IMR-90 (cell line): ENCODE measurements at regions of chr6 and their contacts with region 1.

Region 1: DNA sequence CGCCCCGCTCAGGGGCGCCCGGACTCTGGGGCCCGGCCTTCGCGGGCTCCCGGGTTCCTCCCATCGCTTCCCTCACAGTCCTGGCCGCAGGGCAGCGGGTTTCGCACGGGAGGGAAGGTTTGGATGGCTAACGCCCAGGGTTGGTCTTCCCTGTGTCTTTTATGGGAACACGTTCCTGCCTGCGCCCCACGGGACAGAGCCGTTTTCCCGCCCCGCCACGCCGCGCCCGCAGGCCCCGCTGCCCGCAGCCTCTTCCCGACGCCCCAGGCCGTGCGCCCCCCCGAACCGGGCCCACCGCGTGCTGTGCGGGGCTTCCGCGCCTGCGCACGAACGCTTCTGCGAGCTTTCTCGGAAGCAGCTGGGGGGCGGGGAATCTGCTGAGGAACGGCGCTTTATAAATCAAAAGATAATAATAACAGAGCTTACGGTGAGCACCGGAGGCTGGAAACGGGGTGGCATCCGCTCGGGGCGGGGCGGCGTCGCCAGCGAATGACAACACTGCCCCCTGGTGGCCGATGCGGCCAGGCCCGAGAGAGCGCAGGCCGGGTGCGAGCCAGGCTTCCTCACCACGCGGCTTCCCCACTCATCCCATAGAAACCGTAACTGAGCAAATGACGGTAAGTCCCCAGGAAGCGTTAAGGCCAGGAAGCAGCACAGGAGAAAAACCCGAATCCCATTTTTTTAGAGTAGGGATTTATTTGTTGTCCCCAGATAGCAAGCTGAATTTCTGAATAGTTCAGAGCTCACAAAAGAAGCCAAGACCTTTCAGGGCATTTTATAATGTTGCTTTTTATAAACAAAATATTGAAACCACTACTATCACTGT is 116.4 kb downstream of the MYLK4 start:
- DNase-seq: peak; percentile 81
- ATAC-seq: peak; percentile 88
- H3K4me3 ChIP-seq: peak overlapping the region; percentile 17; the same call in 1 of the 2 replicates
- H3K27ac ChIP-seq: peak overlapping the region; percentile 24
- H3K4me1 ChIP-seq: peaks cover 19% of the 10 kb centered on the region
- H3K27me3 ChIP-seq: peaks cover under 1% of the 10 kb centered on the region
- CTCF ChIP-seq: peak; percentile 97
- POLR2A ChIP-seq: 0 out of 2 replicates have a peak, but pooled peaks have one; percentile 33
- RAD21 ChIP-seq: peak; percentile 94

Region 2: GRCh38 chr6:1686117-1687098 is 947.9 kb before region 1 on chr6:
- CTCF ChIA-PET with region 1: no interaction called
- POLR2A ChIA-PET with region 1: no interaction called
- dilution Hi-C with region 1: no loop called
- in situ Hi-C with region 1: no loop called
- intact Hi-C with region 1: loop called (anchors 2 kb)
- DNase-seq: peak; percentile 96
- ATAC-seq: peak; percentile 89
- H3K4me3 ChIP-seq: no peak overlapping the region
- H3K27ac ChIP-seq: peak overlapping the region; percentile 83
- H3K4me1 ChIP-seq: peaks cover 14% of the 10 kb centered on the region
- H3K27me3 ChIP-seq: no peaks in the 10 kb centered on the region
- CTCF ChIP-seq: peak; percentile 50
- POLR2A ChIP-seq: no peak; the same call in 1 of the 2 replicates
- RAD21 ChIP-seq: peak; percentile 19; the same call in 1 of the 2 replicates

Region 3: GRCh38 chr6:2186516-2186915 is 447.8 kb before region 1 on chr6:
- CTCF ChIA-PET with region 1: no interaction called
- POLR2A ChIA-PET with region 1: no interaction called
- dilution Hi-C with region 1: no loop called
- in situ Hi-C with region 1: no loop called
- intact Hi-C with region 1: loop called (anchors 10 kb)
- DNase-seq: no peak
- ATAC-seq: no peak
- H3K4me3 ChIP-seq: no peak overlapping the region
- H3K27ac ChIP-seq: no peak overlapping the region
- H3K4me1 ChIP-seq: peaks cover 2% of the 10 kb centered on the region
- H3K27me3 ChIP-seq: no peaks in the 10 kb centered on the region
- CTCF ChIP-seq: no peak
- POLR2A ChIP-seq: no peak
- RAD21 ChIP-seq: no peak

Region 4: DNA sequence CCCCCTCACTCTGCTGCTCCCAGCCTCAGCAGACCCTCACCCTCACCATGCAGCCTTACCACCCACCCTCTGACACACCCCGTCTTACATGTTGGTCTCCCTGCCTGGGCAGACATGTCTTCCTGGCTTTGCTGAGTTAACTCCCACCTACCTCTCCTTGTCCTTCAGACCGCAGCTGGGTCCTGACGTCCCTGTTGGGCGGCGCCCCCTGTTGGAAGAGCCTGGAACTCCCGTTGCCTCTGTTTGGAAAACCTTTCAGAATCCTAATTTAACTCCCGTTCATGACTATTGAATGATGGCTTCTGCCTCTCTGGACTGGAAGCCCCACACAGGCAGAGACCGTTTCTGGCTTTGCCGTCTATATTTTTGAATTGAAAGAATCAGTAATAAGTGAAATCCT is 128.7 kb before region 1 on chr6:
- CTCF ChIA-PET with region 1: no interaction called
- POLR2A ChIA-PET with region 1: no interaction called
- dilution Hi-C with region 1: no loop called
- in situ Hi-C with region 1: no loop called
- intact Hi-C with region 1: loop called (anchors 5 kb)
- DNase-seq: no peak
- ATAC-seq: no peak
- H3K4me3 ChIP-seq: no peak overlapping the region
- H3K27ac ChIP-seq: no peak overlapping the region
- H3K4me1 ChIP-seq: peaks cover 9% of the 10 kb centered on the region; the same call in 1 of the 2 replicates
- H3K27me3 ChIP-seq: peaks cover 23% of the 10 kb centered on the region
- CTCF ChIP-seq: peak; percentile 17; the same call in 1 of the 2 replicates
- POLR2A ChIP-seq: no peak
- RAD21 ChIP-seq: no peak

Region 5: GRCh38 chr6:2793534-2794151 is 159.3 kb after region 1 on chr6:
- CTCF ChIA-PET with region 1: no interaction called
- POLR2A ChIA-PET with region 1: no interaction called
- dilution Hi-C with region 1: no loop called
- in situ Hi-C with region 1: no loop called
- intact Hi-C with region 1: no loop called
- DNase-seq: no peak
- ATAC-seq: no peak
- H3K4me3 ChIP-seq: no peak overlapping the region
- H3K27ac ChIP-seq: no peak overlapping the region
- H3K4me1 ChIP-seq: peaks cover 17% of the 10 kb centered on the region
- H3K27me3 ChIP-seq: no peaks in the 10 kb centered on the region
- CTCF ChIP-seq: no peak
- POLR2A ChIP-seq: no peak
- RAD21 ChIP-seq: no peak